Heart left ventricle (tissue), 16 donors: ENCODE measurements at regions of chr19 and their contacts with region 1.

Region 1: GRCh38 chr19:19320362-19321142 is at the starts of genes MAU2 and SUGP1:
- DNase-seq: peak; percentile 88 to 94 (median 92)
- ATAC-seq: peak; percentile 94 to 96 (median 94)
- H3K4me3 ChIP-seq: peak within 1 kb of the TSS; percentile 76 to 100 (median 94)
- H3K27ac ChIP-seq: peak within 1 kb of the TSS; percentile 75 to 97 (median 92)
- H3K4me1 ChIP-seq: peaks cover 4 to 65% (median 44%) of the 10 kb centered on the region in 12 donors
- H3K27me3 ChIP-seq: no peaks in the 10 kb centered on the region
- CTCF ChIP-seq: peak; percentile 20 to 65 (median 34)
- POLR2A ChIP-seq: peak in 1 of 2 donors; percentile 45
- total RNA-seq, gene MAU2: 26.5 to 46.4 (median 32.0) TPM
- total RNA-seq, gene SUGP1: 34.2 to 53.4 (median 41.9) TPM

Region 2: GRCh38 chr19:19192078-19192882 is 128.3 kb before region 1 on chr19 and contains the starts of genes BORCS8 and RFXANK:
- intact Hi-C with region 1: loop called in 4 of 10 experiments (anchors 1 to 5 kb)
- DNase-seq: peak; percentile 98 to 100 (median 99)
- ATAC-seq: peak; percentile 96 to 98 (median 97)
- H3K4me3 ChIP-seq: peak within 1 kb of the TSS; percentile 63 to 100 (median 93)
- H3K27ac ChIP-seq: peak within 1 kb of the TSS; percentile 97 to 100 (median 100)
- H3K4me1 ChIP-seq: peaks cover 4 to 57% (median 36%) of the 10 kb centered on the region in 12 donors
- H3K27me3 ChIP-seq: no peaks in the 10 kb centered on the region
- CTCF ChIP-seq: no peak
- POLR2A ChIP-seq: peak in 1 of 2 donors; percentile 71
- total RNA-seq, gene BORCS8: 14.4 to 28.9 (median 22.7) TPM
- total RNA-seq, gene RFXANK: 26.5 to 45.7 (median 39.5) TPM

Region 3: DNA sequence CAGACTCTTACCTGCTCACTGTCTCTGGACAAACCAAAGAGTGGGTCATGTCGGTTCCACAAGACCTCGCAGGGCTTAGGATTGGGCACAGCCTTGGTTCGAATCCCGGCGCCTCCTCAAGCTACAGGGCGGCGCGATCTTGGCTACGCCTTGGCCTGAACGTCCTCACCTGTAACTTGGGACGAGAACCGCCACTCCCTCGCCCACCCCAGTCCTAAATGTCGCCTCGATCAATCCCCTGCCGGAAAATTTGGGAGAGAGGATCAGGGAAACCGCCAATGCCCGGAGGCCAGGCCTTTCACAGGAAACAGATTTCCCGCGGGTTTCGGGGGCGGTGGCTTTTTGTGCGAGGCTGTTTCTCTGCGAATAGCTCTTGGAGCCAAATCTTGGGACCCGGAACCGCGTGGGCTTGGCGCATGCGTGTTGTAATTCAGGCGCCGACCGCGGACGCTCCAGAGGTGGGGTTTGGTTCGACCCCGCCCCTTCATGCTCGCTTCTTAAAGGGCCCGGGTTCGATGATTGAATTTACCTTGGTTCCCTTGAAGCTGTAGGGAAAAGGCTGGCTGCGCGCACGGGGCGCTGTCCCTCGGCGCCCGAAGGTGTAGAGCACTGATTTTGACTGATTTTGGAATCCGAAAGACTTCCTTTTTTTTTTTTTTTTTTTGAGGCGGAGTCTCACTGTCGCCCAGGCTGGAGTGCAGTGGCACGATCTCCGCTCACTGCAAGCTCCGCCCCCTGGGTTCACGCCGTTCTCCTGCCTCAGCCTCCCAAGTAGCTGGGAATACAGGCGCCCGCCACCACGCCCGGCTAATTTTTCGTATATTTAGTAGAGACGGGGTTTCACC is 117.3 kb before region 1 on chr19 and contains the start of gene NR2C2AP:
- intact Hi-C with region 1: loop called in 1 of 10 experiments (anchors 10 kb)
- DNase-seq: peak; percentile 91 to 96 (median 93)
- ATAC-seq: peak; percentile 83 to 97 (median 94)
- H3K4me3 ChIP-seq: peak within 1 kb of the TSS; percentile 12 to 80 (median 66)
- H3K27ac ChIP-seq: peak within 1 kb of the TSS; percentile 11 to 88 (median 77)
- H3K4me1 ChIP-seq: peaks cover 0 to 13% (median 8%) of the 10 kb centered on the region in 12 donors
- H3K27me3 ChIP-seq: peaks cover 0 to 6% (median 0%) of the 10 kb centered on the region in 9 donors
- CTCF ChIP-seq: no peak
- POLR2A ChIP-seq: peak in 1 of 2 donors; percentile 36
- total RNA-seq, gene NR2C2AP: 2.6 to 13.1 (median 5.7) TPM